Mammary epithelial cell (primary cell): ENCODE measurements at regions of chr21 and their contacts with region 1.

Region 1: DNA sequence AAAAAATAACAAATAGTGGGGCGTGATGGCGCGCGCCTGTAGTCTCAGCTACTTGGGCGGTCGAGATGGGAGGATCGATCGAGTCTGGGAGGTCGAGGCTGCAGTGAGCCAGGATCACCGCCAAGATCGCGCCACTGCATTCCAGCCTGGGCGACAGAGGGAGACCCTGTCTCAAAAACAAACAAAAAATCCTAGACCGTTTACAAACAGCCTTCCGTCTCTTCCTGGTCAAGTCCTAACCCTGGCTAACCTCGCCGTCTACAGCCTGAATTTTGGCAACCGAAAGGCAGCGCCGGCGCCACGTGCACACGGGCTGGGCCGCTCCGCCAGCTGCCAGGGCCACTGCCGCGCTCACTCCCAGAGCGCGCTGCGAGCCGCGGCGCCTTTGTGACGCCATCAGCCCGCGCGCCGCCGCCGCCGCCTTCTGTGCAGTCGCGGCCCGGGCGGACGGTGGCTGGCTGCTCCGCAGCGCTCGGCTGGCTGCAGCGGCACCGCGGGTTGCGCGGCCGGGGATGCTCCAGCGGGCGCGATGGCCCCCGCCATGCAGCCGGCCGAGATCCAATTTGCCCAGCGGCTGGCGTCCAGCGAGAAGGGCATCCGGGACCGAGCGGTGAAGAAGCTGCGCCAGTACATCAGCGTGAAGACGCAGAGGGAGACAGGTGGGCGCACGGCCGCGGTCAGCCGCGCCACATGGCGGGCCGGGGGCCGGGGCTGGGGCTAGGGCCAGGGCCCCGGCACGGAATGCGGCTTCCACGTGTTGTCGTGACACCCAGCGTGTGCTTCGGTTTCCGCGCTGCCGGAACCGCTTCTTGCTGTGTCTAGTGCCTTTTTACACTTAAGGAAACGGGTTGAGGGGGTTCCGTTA is at the starts of genes HSF2BP and RRP1B:
- DNase-seq: peak; percentile 81
- H3K4me3 ChIP-seq: peak within 1 kb of the TSS; percentile 69 to 93 (median 79)
- H3K27ac ChIP-seq: peak within 1 kb of the TSS; percentile 63
- H3K4me1 ChIP-seq: peaks cover 23% of the 10 kb centered on the region
- H3K27me3 ChIP-seq: no peaks in the 10 kb centered on the region
- CTCF ChIP-seq: no peak
- total RNA-seq, gene HSF2BP: 4.0 to 4.2 TPM
- total RNA-seq, gene RRP1B: 26.7 to 36.6 TPM

Region 2: GRCh38 chr21:43318841-43319781 is 340.3 kb before region 1 on chr21:
- CTCF ChIA-PET with region 1: no interaction called
- dilution Hi-C with region 1: loop called (anchors 10 kb)
- in situ Hi-C with region 1: no loop called
- intact Hi-C with region 1: no loop called
- DNase-seq: peak; percentile 80
- H3K4me3 ChIP-seq: no peak overlapping the region
- H3K27ac ChIP-seq: peak overlapping the region; percentile 65
- H3K4me1 ChIP-seq: peaks cover 25% of the 10 kb centered on the region
- H3K27me3 ChIP-seq: no peaks in the 10 kb centered on the region
- CTCF ChIP-seq: no peak

Region 3: DNA sequence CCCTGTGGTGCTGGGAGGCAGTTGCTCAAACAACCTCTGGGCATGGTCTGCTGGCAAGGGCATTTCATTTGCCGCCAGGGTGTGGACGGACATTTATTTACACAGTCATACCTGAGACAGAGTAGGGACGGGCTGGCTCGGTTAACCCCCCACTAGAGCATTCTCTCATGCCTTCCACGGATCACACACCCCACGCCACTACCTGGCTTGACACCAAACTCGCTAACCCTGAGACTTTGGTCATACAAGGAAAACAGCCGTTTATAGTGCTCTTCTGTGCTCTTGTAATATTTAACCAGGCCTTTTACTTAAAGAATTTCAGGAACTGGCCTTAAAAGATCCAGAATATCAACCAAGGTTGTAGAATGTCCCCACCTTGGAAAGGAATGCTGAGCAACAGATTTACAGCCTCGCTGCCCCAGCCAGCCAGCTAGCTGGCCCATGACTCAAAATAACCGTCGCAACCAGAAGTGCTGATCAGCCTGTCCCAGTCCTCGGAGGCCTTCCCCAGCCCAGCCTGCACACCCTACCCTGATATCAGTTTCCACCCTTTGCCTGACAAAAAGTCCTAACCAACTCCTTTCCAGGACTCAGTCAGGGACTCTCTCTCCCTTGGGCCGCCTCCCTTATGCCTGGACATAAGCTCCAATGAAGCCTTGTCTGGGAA is 53.1 kb after region 1 on chr21:
- CTCF ChIA-PET with region 1: no interaction called
- dilution Hi-C with region 1: loop called (anchors 5 kb)
- in situ Hi-C with region 1: no loop called
- intact Hi-C with region 1: no loop called
- DNase-seq: peak; percentile 66
- H3K4me3 ChIP-seq: no peak overlapping the region
- H3K27ac ChIP-seq: peak overlapping the region; percentile 86
- H3K4me1 ChIP-seq: peaks cover 16% of the 10 kb centered on the region
- H3K27me3 ChIP-seq: no peaks in the 10 kb centered on the region
- CTCF ChIP-seq: no peak

Region 4: DNA sequence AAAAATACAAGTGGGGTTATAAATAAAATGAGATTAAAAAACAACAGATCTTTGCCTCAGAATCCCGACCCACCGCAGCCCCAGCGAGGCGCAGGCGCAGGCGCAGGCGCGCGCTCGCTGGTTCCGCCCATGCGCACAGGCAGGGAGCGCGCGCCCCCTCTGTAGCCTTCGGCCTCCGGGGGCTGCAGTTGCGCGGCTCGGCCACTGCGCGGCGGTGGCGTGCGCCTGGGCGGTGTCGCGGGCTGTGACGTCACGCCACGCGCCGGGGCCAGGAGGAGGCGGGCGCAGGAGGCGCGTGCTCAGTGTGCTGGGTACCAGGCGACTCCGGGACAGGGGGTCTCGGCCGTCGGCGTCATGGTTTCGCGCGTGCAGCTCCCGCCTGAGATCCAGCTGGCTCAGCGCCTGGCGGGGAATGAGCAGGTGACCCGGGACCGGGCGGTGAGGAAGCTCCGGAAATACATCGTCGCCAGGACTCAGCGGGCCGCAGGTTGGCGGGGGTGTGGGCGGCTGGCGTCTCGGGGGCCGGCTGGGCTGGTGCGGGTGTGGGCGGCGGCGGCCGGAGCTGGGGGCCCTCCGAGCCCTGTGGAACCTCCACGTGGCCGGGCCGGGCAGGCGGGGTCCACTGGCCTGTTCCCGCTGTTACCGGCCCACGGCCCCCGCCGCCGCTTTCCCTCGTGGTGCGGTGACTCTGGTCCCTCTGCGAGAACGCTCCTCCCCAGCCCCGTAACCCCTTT is 130.1 kb after region 1 on chr21 and contains the start of gene RRP1:
- CTCF ChIA-PET with region 1: no interaction called
- dilution Hi-C with region 1: no loop called
- in situ Hi-C with region 1: no loop called
- intact Hi-C with region 1: no loop called
- DNase-seq: peak; percentile 87
- H3K4me3 ChIP-seq: peak within 1 kb of the TSS; percentile 84 to 100 (median 87)
- H3K27ac ChIP-seq: peak within 1 kb of the TSS; percentile 68
- H3K4me1 ChIP-seq: peaks cover 8% of the 10 kb centered on the region
- H3K27me3 ChIP-seq: no peaks in the 10 kb centered on the region
- CTCF ChIP-seq: peak; percentile 78 to 92
- total RNA-seq, gene RRP1: 20.7 to 40.8 TPM